Ascending aorta (tissue), 2 donors: ENCODE measurements at regions of chr16 and their contacts with region 1.

Region 1: GRCh38 chr16:31873556-31874365 is at the start of gene ZNF267:
- DNase-seq: peak; percentile 82 to 98
- H3K4me3 ChIP-seq: peak within 1 kb of the TSS; percentile 75 to 87
- H3K27ac ChIP-seq: peak within 1 kb of the TSS; percentile 88 to 92
- H3K4me1 ChIP-seq: peaks cover 3 to 14% of the 10 kb centered on the region in 2 donors
- H3K27me3 ChIP-seq: no peaks in the 10 kb centered on the region
- CTCF ChIP-seq: no peak
- total RNA-seq, gene ZNF267: 3.8 TPM

Region 2: DNA sequence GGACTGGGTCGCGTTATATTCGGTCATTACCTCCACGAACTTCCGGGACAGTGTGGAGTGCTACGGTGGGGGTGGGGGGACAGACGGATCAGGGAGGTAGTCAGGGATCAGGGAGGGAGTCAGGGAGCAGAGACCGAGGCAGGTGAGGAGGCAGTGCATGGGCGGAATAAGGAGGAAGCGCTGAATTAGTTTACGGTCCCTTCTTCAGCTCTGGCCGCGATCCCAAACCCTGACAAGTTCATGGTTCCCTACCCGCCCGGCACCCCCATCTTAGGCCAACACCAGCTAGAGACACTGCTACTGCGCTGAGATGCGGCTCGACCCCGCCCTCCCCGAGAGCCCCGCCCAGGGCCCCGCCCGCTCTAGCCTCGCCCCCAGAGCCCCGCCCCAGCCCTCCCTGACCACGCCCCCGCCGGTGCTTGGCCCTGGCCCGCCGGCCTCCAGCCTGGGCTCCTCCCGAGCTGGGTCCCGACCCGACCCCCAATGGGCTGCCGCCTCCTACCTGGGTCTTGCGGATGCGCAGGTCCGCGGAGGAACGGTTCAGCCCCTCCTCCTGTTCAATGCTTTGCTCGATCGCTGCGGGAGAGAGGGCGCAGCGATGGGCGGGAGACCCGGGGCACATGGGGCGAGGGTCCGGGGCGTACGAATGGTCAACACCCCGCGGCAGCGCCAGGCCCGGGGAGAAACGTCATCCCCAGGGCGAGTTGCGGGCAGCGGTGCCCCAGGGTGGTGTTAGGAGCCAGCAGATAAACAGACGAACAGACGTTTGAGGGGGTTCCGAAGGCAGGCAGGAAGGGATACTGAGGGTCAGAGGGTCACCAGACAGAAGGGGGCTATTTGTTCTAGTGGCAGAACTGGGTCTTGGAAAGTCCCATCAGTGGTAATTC is 876.5 kb before region 1 on chr16:
- intact Hi-C with region 1: loop called (anchors 5 kb)
- DNase-seq: peak in 1 of 2 donors; percentile 90
- H3K4me3 ChIP-seq: peak overlapping the region; percentile 65 to 78
- H3K27ac ChIP-seq: peak overlapping the region; percentile 90 to 94
- H3K4me1 ChIP-seq: peaks cover 9 to 27% of the 10 kb centered on the region in 2 donors
- H3K27me3 ChIP-seq: no peaks in the 10 kb centered on the region
- CTCF ChIP-seq: no peak

Region 3: DNA sequence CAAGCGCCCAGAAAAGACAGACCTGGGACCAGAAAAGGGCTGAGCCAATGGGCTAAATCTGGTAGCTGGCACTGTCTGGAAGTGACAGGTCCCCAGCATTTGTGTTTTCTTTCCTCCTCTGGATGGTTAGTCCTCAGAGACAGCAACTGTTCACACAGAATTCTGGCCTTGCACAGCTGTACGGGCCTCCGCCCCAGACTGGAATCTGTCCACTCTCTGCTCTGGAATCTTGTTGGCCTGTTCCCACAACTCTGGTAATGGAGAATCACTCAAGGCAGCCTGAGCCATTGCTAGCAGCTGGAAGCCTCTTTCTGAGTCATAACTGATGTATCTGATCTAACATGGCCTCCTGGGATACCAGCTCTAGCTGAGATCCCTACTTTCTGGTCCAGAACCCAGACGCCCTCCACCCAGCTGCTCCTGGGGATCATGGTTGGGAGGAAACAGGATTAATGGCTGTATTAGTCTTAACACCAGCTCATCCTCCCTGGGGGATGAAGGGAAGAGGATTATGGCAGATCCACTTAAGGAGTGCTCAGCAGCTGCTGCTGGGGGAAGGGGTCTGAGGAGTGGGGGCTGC is 808.8 kb before region 1 on chr16:
- intact Hi-C with region 1: no loop called
- DNase-seq: peak in 1 of 2 donors; percentile 79
- H3K4me3 ChIP-seq: no peak overlapping the region
- H3K27ac ChIP-seq: peak overlapping the region; percentile 3 to 53
- H3K4me1 ChIP-seq: no peaks in the 10 kb centered on the region
- H3K27me3 ChIP-seq: no peaks in the 10 kb centered on the region
- CTCF ChIP-seq: no peak

Region 4: DNA sequence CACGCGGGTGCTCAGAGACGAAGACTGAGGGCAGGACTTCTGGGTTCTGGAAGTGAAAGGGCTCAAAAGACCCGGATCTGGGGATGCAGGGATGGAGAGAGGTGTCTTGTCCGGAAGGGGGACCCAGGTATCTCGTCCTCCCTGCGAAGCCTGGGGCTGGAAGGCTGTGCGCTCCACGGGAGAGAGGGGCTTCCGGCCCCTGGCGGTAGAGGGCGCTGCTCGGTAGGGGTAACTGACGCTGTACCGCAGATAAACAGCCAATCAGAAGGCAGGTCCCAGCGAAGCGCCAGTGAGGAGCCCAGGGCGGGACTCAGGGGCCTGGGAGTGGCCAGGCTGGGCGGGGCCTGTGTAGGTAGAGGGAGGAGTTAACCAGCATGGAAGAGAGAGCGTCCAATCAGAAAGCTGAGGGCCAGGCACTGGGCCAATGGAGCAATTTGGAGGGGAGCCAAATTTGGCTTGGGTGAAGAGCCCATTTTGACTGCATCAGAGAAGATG is 401.0 kb before region 1 on chr16:
- intact Hi-C with region 1: loop called (anchors 1 kb)
- DNase-seq: peak; percentile 78 to 97
- H3K4me3 ChIP-seq: peak overlapping the region; percentile 89 to 91
- H3K27ac ChIP-seq: peak overlapping the region; percentile 96 to 100
- H3K4me1 ChIP-seq: peaks cover 0 to 26% of the 10 kb centered on the region in 2 donors
- H3K27me3 ChIP-seq: no peaks in the 10 kb centered on the region
- CTCF ChIP-seq: peak; percentile 87 to 93 (median 88)

Region 5: GRCh38 chr16:31507929-31508705 is 365.6 kb before region 1 on chr16 and contains the start of gene RUSF1:
- intact Hi-C with region 1: loop called (anchors 10 kb)
- DNase-seq: peak; percentile 67 to 96
- H3K4me3 ChIP-seq: peak within 1 kb of the TSS; percentile 95 to 97
- H3K27ac ChIP-seq: peak within 1 kb of the TSS; percentile 96 to 97
- H3K4me1 ChIP-seq: peaks cover 5 to 24% of the 10 kb centered on the region in 2 donors
- H3K27me3 ChIP-seq: no peaks in the 10 kb centered on the region
- CTCF ChIP-seq: no peak
- total RNA-seq, gene RUSF1: 80.9 TPM

Region 6: DNA sequence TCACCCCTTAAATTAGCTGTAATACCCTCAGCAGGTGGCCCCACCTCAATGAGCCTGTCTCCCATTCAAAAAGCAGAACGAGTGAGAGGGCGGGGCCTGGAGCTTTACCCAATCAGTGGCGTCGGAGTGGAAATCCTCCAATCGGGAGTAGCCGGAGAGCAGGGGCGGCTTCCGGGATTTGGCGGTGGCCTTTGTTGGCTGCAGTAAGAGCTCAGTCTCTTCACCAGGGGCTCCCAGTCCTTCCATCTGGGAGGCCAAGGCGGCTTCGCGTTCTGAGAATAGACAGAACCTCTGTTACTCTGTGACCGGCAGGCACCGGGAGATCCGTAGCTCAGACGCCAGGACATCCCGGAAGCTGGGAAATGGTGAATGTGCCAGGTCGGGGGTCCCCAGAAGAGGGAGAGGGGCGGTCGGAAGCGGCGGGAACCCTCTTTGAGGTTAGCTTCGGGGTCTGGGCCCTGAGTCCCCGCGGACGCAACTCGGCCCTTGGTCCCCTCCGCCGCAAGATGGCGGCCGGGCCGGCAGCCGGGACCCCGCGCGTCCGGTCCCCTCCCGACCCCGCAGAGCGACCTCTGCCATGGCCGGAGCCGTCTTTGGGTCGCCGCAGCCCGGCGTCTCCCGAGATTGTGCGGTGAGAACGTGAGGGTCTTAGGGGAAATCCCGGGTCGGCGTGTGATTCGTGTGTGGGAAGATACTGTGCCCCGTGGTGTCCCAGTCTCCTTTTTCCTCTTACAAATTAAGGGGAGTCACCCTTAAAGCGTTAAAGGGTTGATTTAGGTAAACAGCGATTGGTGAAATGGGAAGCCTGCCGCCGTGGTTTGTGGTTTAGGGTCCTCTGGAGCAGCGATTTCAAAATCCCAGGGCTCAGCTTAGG is 160.5 kb before region 1 on chr16:
- intact Hi-C with region 1: loop called (anchors 2 kb)
- DNase-seq: peak; percentile 80 to 97
- H3K4me3 ChIP-seq: peak overlapping the region; percentile 82 to 92
- H3K27ac ChIP-seq: peak overlapping the region; percentile 94
- H3K4me1 ChIP-seq: peaks cover 4 to 11% of the 10 kb centered on the region in 2 donors
- H3K27me3 ChIP-seq: no peaks in the 10 kb centered on the region
- CTCF ChIP-seq: no peak